ENCODE measurements at regions of chr12 and their contacts with region 1.

Region 1: GRCh38 chr12:674272-674781 is 11.1 kb upstream of the NINJ2 start:
- DNase-seq: peak; percentile 100
- ATAC-seq: peak; percentile 84
- H3K4me3 ChIP-seq: peak overlapping the region; percentile 61; the same call in 1 of the 2 replicates
- H3K27ac ChIP-seq: peak overlapping the region; percentile 100
- H3K4me1 ChIP-seq: peaks cover 57% of the 10 kb centered on the region
- H3K27me3 ChIP-seq: no peaks in the 10 kb centered on the region
- CTCF ChIP-seq: no peak
- EP300 ChIP-seq: peak; percentile 81 to 88
- POLR2A ChIP-seq: peak; percentile 83
- RAD21 ChIP-seq: peak; percentile 16; the same call in 1 of the 2 replicates

Region 2: DNA sequence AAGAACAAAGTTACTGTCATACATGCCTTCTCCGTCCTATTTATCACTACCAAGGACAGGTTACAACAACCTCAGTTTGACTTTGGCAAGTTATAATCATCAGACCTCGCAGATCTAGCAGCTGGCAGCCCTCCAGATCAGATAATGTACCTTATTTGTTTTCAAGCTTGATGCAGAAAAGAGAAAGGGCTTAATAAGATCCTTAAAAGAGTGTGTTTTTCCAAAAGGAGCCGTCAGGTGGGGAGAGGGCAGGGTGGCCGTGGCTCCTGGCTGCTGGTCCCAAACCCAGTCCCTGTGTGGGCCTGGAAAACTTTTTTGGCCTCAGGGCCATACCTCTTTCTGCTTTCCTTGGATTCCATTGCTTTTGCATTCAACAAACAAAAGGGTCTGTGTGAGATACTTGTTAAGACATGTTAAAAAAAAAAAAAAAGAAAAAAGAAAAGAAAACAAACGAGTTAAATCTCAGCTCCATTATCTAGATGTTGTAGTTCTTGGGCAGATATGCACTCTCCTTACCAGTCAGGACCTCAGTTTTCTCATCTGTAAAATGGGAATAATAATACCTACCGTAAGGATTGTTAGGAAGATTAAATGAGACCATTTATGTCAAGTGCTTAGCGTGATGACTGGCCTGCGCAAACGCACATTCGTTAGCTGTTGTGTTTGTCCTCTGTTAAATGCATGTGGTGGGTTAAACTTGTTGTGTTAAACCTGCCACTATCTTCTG is 149.9 kb before region 1 on chr12:
- CTCF ChIA-PET with region 1: no interaction called
- POLR2A ChIA-PET with region 1: no interaction called
- RAD21 ChIA-PET with region 1: no interaction called
- SMC1A ChIA-PET with region 1: no interaction called
- in situ Hi-C with region 1: no loop called
- intact Hi-C with region 1: no loop called
- DNase-seq: no peak
- ATAC-seq: no peak
- H3K4me3 ChIP-seq: no peak overlapping the region
- H3K27ac ChIP-seq: no peak overlapping the region
- H3K4me1 ChIP-seq: no peaks in the 10 kb centered on the region
- H3K27me3 ChIP-seq: peaks cover 0 to 3% of the 10 kb centered on the region in 2 experiments; a peak in 2 of 4 replicates
- CTCF ChIP-seq: no peak
- EP300 ChIP-seq: no peak
- POLR2A ChIP-seq: no peak
- RAD21 ChIP-seq: no peak

Region 3: GRCh38 chr12:575948-576612 is 98.2 kb before region 1 on chr12:
- CTCF ChIA-PET with region 1: interaction called, 14 read pairs
- POLR2A ChIA-PET with region 1: no interaction called
- RAD21 ChIA-PET with region 1: interaction called, 27 read pairs
- SMC1A ChIA-PET with region 1: interaction called, 5 read pairs
- in situ Hi-C with region 1: no loop called
- intact Hi-C with region 1: loop called (anchors 2 kb)
- DNase-seq: peak; percentile 40
- ATAC-seq: peak; percentile 99
- H3K4me3 ChIP-seq: no peak overlapping the region
- H3K27ac ChIP-seq: peak overlapping the region; percentile 26
- H3K4me1 ChIP-seq: peaks cover 10% of the 10 kb centered on the region
- H3K27me3 ChIP-seq: no peaks in the 10 kb centered on the region
- CTCF ChIP-seq: peak; percentile 90 to 99 (median 96)
- EP300 ChIP-seq: no peak
- POLR2A ChIP-seq: peak; percentile 59
- RAD21 ChIP-seq: peak; percentile 79

Region 4: GRCh38 chr12:630656-631632 is 43.4 kb before region 1 on chr12:
- CTCF ChIA-PET with region 1: interaction called, 4 read pairs
- POLR2A ChIA-PET with region 1: interaction called, 40 read pairs
- RAD21 ChIA-PET with region 1: interaction called, 37 read pairs
- SMC1A ChIA-PET with region 1: interaction called, 38 read pairs
- in situ Hi-C with region 1: no loop called
- intact Hi-C with region 1: loop called (anchors 2 kb)
- DNase-seq: no peak
- ATAC-seq: peak; percentile 98
- H3K4me3 ChIP-seq: peak overlapping the region; percentile 60
- H3K27ac ChIP-seq: peak overlapping the region; percentile 92
- H3K4me1 ChIP-seq: peaks cover 16% of the 10 kb centered on the region
- H3K27me3 ChIP-seq: no peaks in the 10 kb centered on the region
- CTCF ChIP-seq: no peak
- EP300 ChIP-seq: no peak
- POLR2A ChIP-seq: peak; percentile 86
- RAD21 ChIP-seq: no peak

Region 5: GRCh38 chr12:662566-663292 is 11.6 kb before region 1 on chr12:
- CTCF ChIA-PET with region 1: interaction called, 22 read pairs
- POLR2A ChIA-PET with region 1: interaction called, 79 read pairs
- RAD21 ChIA-PET with region 1: interaction called, 88 read pairs
- SMC1A ChIA-PET with region 1: interaction called, 77 read pairs
- in situ Hi-C with region 1: no loop called
- intact Hi-C with region 1: no loop called
- DNase-seq: no peak
- ATAC-seq: no peak
- H3K4me3 ChIP-seq: no peak overlapping the region
- H3K27ac ChIP-seq: peak overlapping the region; percentile 17; the same call in 1 of the 2 replicates
- H3K4me1 ChIP-seq: peaks cover 60% of the 10 kb centered on the region
- H3K27me3 ChIP-seq: no peaks in the 10 kb centered on the region
- CTCF ChIP-seq: no peak
- EP300 ChIP-seq: no peak
- POLR2A ChIP-seq: no peak
- RAD21 ChIP-seq: no peak

Region 6: DNA sequence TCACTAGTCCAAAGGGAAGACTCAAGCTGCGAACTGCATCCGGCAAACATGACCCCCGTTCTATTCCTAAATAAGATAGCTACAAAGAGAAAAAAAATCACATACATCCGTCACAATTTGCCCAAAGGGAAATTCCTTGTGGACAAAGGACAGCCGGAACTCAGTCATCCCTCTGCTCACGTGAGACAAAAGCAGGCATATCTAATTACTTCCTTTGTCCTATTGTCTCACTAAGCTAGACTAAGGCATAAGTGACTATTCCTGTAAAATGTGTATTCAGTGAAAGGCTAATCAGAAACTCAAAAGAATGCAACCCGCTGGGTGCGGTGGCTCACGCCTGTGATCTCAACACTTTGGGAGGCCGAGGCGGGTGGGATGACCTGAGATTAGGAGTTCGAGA is 16.1 kb after region 1 on chr12:
- CTCF ChIA-PET with region 1: interaction called, 12 read pairs
- POLR2A ChIA-PET with region 1: interaction called, 17 read pairs
- RAD21 ChIA-PET with region 1: interaction called, 31 read pairs
- SMC1A ChIA-PET with region 1: interaction called, 76 read pairs
- in situ Hi-C with region 1: no loop called
- intact Hi-C with region 1: no loop called
- DNase-seq: no peak
- ATAC-seq: no peak
- H3K4me3 ChIP-seq: no peak overlapping the region
- H3K27ac ChIP-seq: no peak overlapping the region
- H3K4me1 ChIP-seq: peaks cover 12% of the 10 kb centered on the region
- H3K27me3 ChIP-seq: no peaks in the 10 kb centered on the region
- CTCF ChIP-seq: no peak
- EP300 ChIP-seq: no peak
- POLR2A ChIP-seq: no peak
- RAD21 ChIP-seq: no peak

Region 7: GRCh38 chr12:724194-724855 is 50.0 kb after region 1 on chr12:
- CTCF ChIA-PET with region 1: interaction called, 9 read pairs
- POLR2A ChIA-PET with region 1: interaction called, 20 read pairs
- RAD21 ChIA-PET with region 1: interaction called, 22 read pairs
- SMC1A ChIA-PET with region 1: interaction called, 39 read pairs
- in situ Hi-C with region 1: no loop called
- intact Hi-C with region 1: loop called (anchors 2 kb)
- DNase-seq: no peak
- ATAC-seq: peak; percentile 66
- H3K4me3 ChIP-seq: no peak overlapping the region
- H3K27ac ChIP-seq: peak overlapping the region; percentile 46; the same call in 1 of the 2 replicates
- H3K4me1 ChIP-seq: peaks cover 36% of the 10 kb centered on the region
- H3K27me3 ChIP-seq: no peaks in the 10 kb centered on the region
- CTCF ChIP-seq: no peak
- EP300 ChIP-seq: no peak
- POLR2A ChIP-seq: no peak
- RAD21 ChIP-seq: no peak

Region 8: DNA sequence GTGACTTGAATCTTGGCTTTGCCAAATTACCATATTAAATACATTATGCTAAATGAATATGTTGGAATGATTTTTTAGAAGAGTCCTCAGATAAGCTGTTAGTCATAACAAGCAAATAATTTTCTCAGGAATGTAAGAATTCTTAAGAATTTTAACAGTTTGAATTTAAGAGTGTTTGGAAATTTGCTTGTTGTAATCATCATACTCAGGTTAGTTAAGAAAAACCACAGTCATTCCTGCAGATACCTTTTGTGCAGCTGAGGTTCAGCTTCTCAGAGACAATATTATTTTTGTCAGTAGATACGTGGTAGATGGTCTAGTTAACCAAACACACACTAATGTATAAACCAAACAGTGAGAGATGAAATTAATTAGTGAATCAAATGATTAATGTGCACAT is 86.9 kb after region 1 on chr12:
- CTCF ChIA-PET with region 1: interaction called, 5 read pairs
- POLR2A ChIA-PET with region 1: interaction called, 8 read pairs
- RAD21 ChIA-PET with region 1: interaction called, 21 read pairs
- SMC1A ChIA-PET with region 1: interaction called, 32 read pairs
- in situ Hi-C with region 1: no loop called
- intact Hi-C with region 1: no loop called
- DNase-seq: no peak
- ATAC-seq: no peak
- H3K4me3 ChIP-seq: peak overlapping the region; percentile 28
- H3K27ac ChIP-seq: no peak overlapping the region
- H3K4me1 ChIP-seq: no peaks in the 10 kb centered on the region; the same call in 1 of the 2 replicates
- H3K27me3 ChIP-seq: no peaks in the 10 kb centered on the region
- CTCF ChIP-seq: no peak
- EP300 ChIP-seq: no peak
- POLR2A ChIP-seq: no peak
- RAD21 ChIP-seq: no peak

Measured in GM12878 (cell line).